Gastrocnemius medialis (tissue), 4 donors: ENCODE measurements at regions of chr9 and their contacts with region 1.

Region 1: GRCh38 chr9:36407122-36407723 is 7.2 kb upstream of the RNF38 start:
- DNase-seq: peak; percentile 15 to 36
- ATAC-seq: peak; percentile 81 to 89
- H3K4me3 ChIP-seq: no peak overlapping the region
- H3K27ac ChIP-seq: peak overlapping the region in 1 of 4 donors; percentile 45
- H3K4me1 ChIP-seq: peaks cover 2 to 6% of the 10 kb centered on the region in 2 donors
- H3K27me3 ChIP-seq: no peaks in the 10 kb centered on the region
- CTCF ChIP-seq: peak; percentile 86 to 96 (median 89)
- POLR2A ChIP-seq: no peak

Region 2: DNA sequence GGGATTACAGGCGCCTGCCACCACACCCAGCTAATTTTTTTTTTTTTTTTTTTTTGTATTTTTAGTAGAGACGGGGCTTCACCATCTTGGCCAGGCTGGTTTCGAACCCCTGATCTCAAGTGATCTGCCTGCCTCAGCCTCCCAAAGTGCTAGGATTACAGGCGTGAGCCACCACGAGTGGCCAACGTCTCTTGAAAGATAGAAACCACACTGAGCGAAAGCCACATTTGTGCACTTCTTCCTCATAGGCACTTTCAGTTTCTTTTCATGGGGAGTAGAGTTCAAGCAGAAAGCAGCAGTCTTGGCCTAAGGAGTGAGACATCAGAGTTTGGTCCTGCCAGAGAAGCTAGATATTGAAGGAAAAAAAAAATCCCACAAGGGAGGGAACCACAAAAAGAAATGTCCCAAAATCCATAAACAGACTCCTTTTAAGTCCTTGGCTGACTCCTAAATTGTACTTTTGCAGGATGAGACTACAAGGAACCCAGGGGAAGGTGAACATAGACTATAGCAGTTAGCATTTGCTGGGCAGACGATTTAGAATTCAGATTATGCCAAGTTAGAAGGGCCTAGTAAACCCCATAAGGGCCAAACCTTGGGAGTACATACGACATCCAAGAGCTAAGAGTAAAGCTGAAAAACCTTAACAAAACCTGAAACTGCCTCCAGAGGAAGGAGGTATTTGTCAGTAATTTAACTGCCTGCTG is 314.6 kb before region 1 on chr9:
- in situ Hi-C with region 1: no loop called
- intact Hi-C with region 1: no loop called
- DNase-seq: no peak
- ATAC-seq: peak in 1 of 2 donors; percentile 60
- H3K4me3 ChIP-seq: no peak overlapping the region
- H3K27ac ChIP-seq: peak overlapping the region in 3 of 4 donors; percentile 0 to 22 (median 15)
- H3K4me1 ChIP-seq: peaks cover 0 to 13% of the 10 kb centered on the region in 2 donors
- H3K27me3 ChIP-seq: no peaks in the 10 kb centered on the region
- CTCF ChIP-seq: no peak
- POLR2A ChIP-seq: no peak

Region 3: GRCh38 chr9:36450110-36450732 is 43.0 kb after region 1 on chr9:
- in situ Hi-C with region 1: no loop called
- intact Hi-C with region 1: loop called (anchors 1 kb)
- DNase-seq: no peak
- ATAC-seq: no peak
- H3K4me3 ChIP-seq: no peak overlapping the region
- H3K27ac ChIP-seq: no peak overlapping the region
- H3K4me1 ChIP-seq: peaks cover 0 to 14% of the 10 kb centered on the region in 2 donors
- H3K27me3 ChIP-seq: no peaks in the 10 kb centered on the region
- CTCF ChIP-seq: peak; percentile 18 to 68 (median 34)
- POLR2A ChIP-seq: no peak

Region 4: GRCh38 chr9:36551129-36551528 is 143.9 kb after region 1 on chr9:
- in situ Hi-C with region 1: loop called (anchors 5 kb)
- intact Hi-C with region 1: loop called (anchors 1 kb)
- DNase-seq: no peak
- ATAC-seq: no peak
- H3K4me3 ChIP-seq: no peak overlapping the region
- H3K27ac ChIP-seq: no peak overlapping the region
- H3K4me1 ChIP-seq: no peaks in the 10 kb centered on the region
- H3K27me3 ChIP-seq: no peaks in the 10 kb centered on the region
- CTCF ChIP-seq: no peak
- POLR2A ChIP-seq: no peak

Region 5: GRCh38 chr9:36560857-36561221 is 153.6 kb after region 1 on chr9:
- in situ Hi-C with region 1: loop called in 2 of 4 experiments (anchors 5 kb)
- intact Hi-C with region 1: loop called (anchors 1 kb)
- DNase-seq: no peak
- ATAC-seq: no peak
- H3K4me3 ChIP-seq: no peak overlapping the region
- H3K27ac ChIP-seq: no peak overlapping the region
- H3K4me1 ChIP-seq: no peaks in the 10 kb centered on the region
- H3K27me3 ChIP-seq: no peaks in the 10 kb centered on the region
- CTCF ChIP-seq: no peak
- POLR2A ChIP-seq: no peak